ENCODE measurements at regions of chr6 and their contacts with region 1.

Region 1: DNA sequence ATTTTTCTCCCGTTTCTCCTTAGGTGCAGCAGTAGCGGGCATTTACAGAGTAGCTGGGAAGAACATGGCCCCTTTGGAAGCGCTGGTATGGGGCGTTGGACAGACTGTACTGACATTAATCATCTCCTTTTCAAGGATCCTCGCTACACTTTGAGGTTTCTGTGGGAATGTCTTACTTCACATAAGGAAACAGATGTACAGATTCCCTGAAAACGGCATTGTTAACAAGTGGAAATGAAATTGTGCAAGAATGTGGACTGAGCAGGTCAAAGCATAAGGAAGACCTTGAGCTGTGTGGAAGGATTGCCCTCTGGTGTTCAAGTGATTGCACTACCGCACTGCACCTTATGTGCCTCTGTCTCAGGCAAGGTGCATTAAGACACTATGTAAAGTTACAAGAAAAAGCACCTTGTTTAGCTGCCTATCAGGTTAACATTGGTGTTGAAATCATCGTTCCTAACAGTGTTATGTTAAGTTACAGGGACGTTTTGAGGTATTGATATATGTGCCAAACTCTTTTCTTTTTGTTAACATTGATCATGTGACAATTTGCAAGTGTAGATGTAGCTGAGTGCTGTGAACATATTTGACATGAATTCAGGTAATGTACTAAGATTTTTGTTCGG is 38.0 kb downstream of the TMEM170B start:
- DNase-seq: peak; percentile 75 to 86
- H3K4me3 ChIP-seq: no peak overlapping the region
- H3K27ac ChIP-seq: no peak overlapping the region
- H3K4me1 ChIP-seq: peaks cover 3% of the 10 kb centered on the region
- H3K27me3 ChIP-seq: no peaks in the 10 kb centered on the region
- CTCF ChIP-seq: peak; percentile 99

Region 2: DNA sequence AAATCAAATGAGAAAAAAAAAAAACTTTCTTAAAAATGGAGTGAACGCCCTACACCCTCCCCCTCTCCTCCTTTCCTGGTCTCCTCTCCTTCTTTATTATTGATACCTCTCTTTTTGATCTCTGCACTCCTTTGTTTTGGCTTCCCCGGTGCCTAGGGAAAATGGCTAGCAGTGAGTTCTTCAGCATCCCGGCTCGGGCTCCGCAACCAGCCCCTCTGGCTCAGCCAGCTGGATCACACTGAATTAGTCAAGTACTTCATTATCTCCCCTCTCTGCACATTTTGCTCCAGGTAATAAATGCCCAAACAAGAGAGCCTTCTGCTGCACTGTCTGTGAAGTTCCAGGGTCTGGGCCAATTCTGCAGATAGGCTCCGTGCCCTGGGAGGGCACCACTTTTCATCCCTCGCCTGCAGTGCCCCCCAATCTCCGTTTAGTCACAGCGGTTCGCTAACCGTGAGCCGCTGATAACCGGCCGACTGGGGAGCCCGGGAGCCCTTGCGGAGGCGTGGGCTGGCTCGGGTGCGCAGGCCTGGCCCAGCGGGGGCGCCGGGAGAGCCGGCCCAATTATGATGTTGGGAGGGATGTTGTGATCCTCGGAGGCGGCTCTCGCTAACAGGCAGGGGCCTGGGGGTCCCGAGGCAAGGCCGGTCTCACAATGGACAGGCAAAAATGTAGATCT is 1462.5 kb before region 1 on chr6:
- CTCF ChIA-PET with region 1: no interaction called
- POLR2A ChIA-PET with region 1: no interaction called
- intact Hi-C with region 1: no loop called
- DNase-seq: no peak
- H3K4me3 ChIP-seq: no peak overlapping the region
- H3K27ac ChIP-seq: no peak overlapping the region
- H3K4me1 ChIP-seq: no peaks in the 10 kb centered on the region
- H3K27me3 ChIP-seq: no peaks in the 10 kb centered on the region
- CTCF ChIP-seq: no peak

Region 3: DNA sequence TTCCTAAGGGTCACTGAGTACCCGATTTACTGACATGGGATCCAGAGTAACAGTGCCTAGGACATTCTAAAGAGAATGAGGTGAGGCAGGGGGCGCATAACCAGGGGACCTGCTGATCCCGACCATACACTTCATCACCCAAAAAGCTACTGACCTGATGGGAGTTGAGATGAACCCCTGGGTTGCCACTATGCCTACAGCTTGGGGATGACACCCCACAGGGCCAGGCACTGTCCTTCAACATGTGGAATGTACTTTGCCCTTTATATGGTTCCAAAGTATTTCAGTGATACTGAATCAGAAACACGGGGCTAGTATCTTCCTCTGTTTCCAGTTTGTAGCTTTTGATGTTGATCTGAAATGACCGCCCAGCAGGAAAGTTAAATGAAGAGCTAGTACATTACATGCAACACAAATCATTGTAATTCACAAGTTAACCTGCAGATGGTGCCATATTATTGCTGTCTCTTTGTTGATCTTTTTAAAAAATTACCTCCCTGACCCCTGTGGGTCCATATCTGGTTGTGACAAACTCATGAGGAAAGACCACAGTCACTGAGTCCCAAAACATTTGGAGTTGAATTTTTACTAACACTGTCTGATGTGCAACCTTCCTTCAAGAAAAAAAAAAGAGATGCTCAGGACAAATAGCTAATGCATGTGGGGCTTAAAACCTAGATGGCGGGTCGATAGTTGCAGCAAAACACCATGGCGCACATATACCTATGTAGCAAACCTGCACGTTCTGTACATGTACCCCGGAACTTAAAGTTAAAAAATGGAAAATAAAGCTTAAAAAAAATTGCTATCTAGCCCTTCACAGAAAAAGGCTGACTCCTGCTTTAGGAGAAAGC is 1097.1 kb before region 1 on chr6:
- CTCF ChIA-PET with region 1: interaction called, 5 read pairs
- POLR2A ChIA-PET with region 1: no interaction called
- intact Hi-C with region 1: loop called (anchors 2 kb)
- DNase-seq: peak; percentile 8 to 37
- H3K4me3 ChIP-seq: no peak overlapping the region
- H3K27ac ChIP-seq: no peak overlapping the region
- H3K4me1 ChIP-seq: peaks cover 11% of the 10 kb centered on the region
- H3K27me3 ChIP-seq: no peaks in the 10 kb centered on the region
- CTCF ChIP-seq: peak; percentile 78

Region 4: GRCh38 chr6:10954590-10955010 is 620.9 kb before region 1 on chr6:
- CTCF ChIA-PET with region 1: interaction called, 4 read pairs
- POLR2A ChIA-PET with region 1: no interaction called
- intact Hi-C with region 1: loop called (anchors 1 kb)
- DNase-seq: peak in 1 of 2 experiments; percentile 57
- H3K4me3 ChIP-seq: no peak overlapping the region
- H3K27ac ChIP-seq: no peak overlapping the region
- H3K4me1 ChIP-seq: no peaks in the 10 kb centered on the region
- H3K27me3 ChIP-seq: no peaks in the 10 kb centered on the region
- CTCF ChIP-seq: peak; percentile 46